ENCODE measurements at regions of chr10 and their contacts with region 1.

Region 1: DNA sequence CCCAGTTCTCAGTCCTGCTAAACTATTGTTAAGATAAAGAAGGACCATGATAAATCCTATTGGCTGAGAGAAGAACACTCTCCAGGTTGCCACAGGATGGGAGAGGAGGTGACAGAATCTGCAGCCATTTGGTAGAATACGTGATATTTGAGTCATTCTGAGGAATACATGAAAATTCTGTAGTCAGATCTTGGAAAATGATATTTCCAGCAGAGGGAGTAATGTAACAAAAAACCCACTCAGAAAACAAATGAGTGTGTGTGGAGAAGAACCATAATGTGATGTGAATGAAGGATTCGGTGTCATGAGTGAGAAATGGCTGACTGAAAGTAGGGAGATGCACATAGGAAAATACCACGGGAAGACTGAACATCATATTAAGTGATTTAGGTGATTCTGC is 128.5 kb upstream of the PFKP start:
- DNase-seq: no peak
- H3K4me3 ChIP-seq: no peak overlapping the region
- H3K27ac ChIP-seq: no peak overlapping the region
- H3K4me1 ChIP-seq: no peaks in the 10 kb centered on the region
- H3K27me3 ChIP-seq: no peaks in the 10 kb centered on the region
- CTCF ChIP-seq: no peak
- POLR2A ChIP-seq: no peak

Region 2: DNA sequence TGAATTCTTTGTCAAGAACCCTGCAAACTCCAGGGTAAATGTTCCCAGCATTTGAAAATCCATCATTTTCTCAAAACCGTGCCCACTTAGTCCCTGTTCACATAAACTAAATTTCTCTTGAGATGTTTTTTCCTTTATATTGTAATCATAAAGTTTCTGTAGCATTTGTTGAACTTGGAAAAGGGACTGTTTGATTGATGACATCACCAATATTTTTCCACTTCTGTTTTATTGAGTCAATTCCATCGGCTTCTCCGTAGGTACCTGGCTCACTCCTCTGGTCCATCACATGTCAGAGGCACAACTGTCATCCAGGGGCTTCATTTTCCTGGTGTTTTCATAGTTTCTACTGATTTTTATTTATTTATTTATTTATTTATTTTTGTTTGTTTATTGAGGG is 334.0 kb before region 1 on chr10:
- intact Hi-C with region 1: no loop called
- DNase-seq: no peak
- H3K4me3 ChIP-seq: no peak overlapping the region
- H3K27ac ChIP-seq: no peak overlapping the region
- H3K4me1 ChIP-seq: no peaks in the 10 kb centered on the region
- H3K27me3 ChIP-seq: no peaks in the 10 kb centered on the region
- CTCF ChIP-seq: no peak
- POLR2A ChIP-seq: no peak

Region 3: DNA sequence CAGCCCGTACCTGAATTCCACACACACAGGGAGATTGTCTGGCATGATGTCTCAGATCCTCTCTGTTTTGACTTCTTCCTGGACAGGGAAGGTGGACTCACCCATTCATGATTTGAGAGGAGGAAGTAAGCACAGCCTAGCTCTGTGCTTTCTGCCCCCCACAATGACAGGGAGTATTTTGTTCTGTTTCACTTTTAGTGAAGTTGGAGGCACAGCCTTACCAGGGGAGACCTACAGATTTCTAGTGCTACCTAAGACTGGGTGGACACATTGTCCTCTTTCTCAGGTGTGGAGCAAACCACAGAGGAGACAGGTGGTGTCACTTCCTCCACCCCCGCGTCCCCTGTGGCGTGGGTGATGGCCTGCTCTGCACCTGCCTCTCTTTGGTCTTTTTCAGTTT is 280.1 kb before region 1 on chr10:
- intact Hi-C with region 1: no loop called
- DNase-seq: no peak
- H3K4me3 ChIP-seq: no peak overlapping the region
- H3K27ac ChIP-seq: no peak overlapping the region
- H3K4me1 ChIP-seq: no peaks in the 10 kb centered on the region
- H3K27me3 ChIP-seq: no peaks in the 10 kb centered on the region
- CTCF ChIP-seq: no peak
- POLR2A ChIP-seq: no peak

Region 4: GRCh38 chr10:3172446-3173170 is 233.7 kb after region 1 on chr10 and contains the start of gene PITRM1:
- intact Hi-C with region 1: loop called in 1 of 2 experiments (anchors 10 kb)
- DNase-seq: peak; percentile 99 to 100 (median 99)
- H3K4me3 ChIP-seq: peak within 1 kb of the TSS; percentile 62 to 90 (median 86)
- H3K27ac ChIP-seq: peak within 1 kb of the TSS; percentile 64 to 94 (median 91)
- H3K4me1 ChIP-seq: peaks cover 10 to 32% of the 10 kb centered on the region in 2 donors
- H3K27me3 ChIP-seq: no peaks in the 10 kb centered on the region
- CTCF ChIP-seq: no peak
- POLR2A ChIP-seq: peak; percentile 97 to 99
- total RNA-seq, gene PITRM1: 83.0 to 204 (median 92.1) TPM

Measured in adrenal gland (tissue), 19 donors.